ENCODE measurements at regions of chr11 and their contacts with region 1.

Region 1: DNA sequence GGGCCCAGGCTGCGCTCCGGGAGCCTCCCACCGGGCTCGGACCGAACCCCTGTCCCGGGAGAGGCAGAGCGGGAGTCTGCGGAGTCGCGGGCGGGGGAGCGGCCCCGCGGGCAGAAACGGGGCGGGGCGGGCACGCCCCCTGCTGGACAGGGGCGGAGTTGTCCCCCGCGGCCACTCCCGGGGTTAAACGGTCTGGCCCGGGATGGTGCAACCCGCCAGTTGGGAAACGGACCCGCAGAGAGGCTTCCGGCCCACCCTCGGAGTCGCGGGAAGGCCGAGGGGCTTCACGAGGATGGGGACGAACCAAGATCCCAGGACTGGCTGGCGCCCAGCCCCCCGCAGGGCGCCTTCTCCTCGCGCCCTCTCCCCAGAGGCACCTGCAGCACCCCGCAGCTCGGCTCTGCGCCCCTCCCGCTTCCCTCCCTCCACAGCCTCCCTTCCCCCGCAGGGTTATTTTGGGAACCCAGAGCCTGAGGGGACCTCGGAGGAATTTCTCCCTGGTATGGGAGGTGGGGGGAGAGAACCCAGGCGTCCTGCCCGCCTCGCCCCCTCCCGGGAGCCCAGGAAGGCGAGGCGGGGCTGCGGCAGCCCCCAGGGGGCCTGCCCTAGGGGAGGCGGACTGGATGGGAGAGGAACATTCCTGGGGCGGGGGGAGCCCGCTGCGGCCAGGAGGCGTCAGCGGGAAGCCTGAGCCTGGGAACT is 902 bp downstream of the RASGRP2 start:
- DNase-seq: no peak
- ATAC-seq: peak; percentile 76
- H3K4me3 ChIP-seq: peak overlapping the region; percentile 36
- H3K27ac ChIP-seq: no peak overlapping the region
- H3K4me1 ChIP-seq: peaks cover 12% of the 10 kb centered on the region
- H3K27me3 ChIP-seq: peaks cover 69% of the 10 kb centered on the region
- CTCF ChIP-seq: peak; percentile 75
- POLR2A ChIP-seq: no peak
- RAD21 ChIP-seq: peak; percentile 52

Region 2: GRCh38 chr11:64767344-64768299 is 24.6 kb after region 1 on chr11:
- CTCF ChIA-PET with region 1: no interaction called
- POLR2A ChIA-PET with region 1: no interaction called
- dilution Hi-C with region 1: no loop called
- in situ Hi-C with region 1: no loop called
- intact Hi-C with region 1: loop called (anchors 1 kb)
- DNase-seq: peak; percentile 60
- ATAC-seq: peak; percentile 53
- H3K4me3 ChIP-seq: no peak overlapping the region
- H3K27ac ChIP-seq: no peak overlapping the region
- H3K4me1 ChIP-seq: peaks cover 13% of the 10 kb centered on the region
- H3K27me3 ChIP-seq: no peaks in the 10 kb centered on the region
- CTCF ChIP-seq: peak; percentile 63
- POLR2A ChIP-seq: no peak
- RAD21 ChIP-seq: peak; percentile 29; the same call in 1 of the 2 replicates

Region 3: DNA sequence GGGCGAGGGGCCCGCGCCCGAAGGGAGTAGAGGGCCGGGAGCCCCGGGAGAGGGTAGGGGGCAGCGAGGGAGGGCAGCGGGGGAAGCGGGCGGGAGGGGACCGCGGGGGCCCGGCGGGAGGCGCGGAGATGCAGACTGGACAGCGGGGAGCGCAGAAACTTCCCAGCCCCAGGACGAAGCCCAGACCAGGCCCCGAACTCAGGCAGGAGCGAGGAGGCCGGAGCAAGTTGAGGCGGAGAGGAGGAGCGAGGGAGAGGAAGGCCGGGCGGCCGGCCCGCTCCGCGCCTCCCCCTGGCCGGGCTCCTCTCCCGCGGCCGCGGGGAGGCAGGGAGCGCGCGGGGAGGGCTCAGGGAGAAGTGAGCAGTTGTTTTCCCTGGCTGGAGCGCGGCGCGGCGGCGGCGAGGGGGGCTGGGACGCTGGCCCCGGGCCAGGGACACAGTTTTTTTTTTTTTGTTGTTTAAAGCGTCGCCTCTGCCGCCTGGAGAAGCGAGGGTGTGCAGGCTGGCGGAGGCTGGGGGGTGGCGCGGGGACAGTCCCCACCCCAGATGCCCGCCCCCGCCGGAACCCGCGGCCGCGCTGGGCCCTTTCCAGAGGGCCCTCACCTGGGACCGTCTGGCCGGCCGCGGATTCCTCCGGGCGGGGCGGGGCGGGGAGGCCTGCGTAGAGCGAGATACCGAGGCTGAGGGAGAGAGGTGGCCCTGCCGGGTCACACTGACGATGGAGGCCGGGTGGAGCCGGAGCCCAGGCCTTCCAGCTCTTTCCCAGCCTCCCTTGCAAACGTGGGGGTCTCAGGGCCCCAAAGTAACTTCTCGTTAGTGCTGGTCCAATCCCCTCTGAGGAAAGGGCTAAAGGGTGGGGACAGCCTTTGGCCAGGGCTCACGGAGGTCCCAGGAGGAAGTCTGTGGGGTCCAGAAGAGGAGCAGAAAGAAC is 815.2 kb after region 1 on chr11 and contains the start of gene LTBP3:
- CTCF ChIA-PET with region 1: no interaction called
- POLR2A ChIA-PET with region 1: no interaction called
- dilution Hi-C with region 1: no loop called
- in situ Hi-C with region 1: no loop called
- intact Hi-C with region 1: no loop called
- DNase-seq: peak; percentile 71
- ATAC-seq: peak; percentile 78
- H3K4me3 ChIP-seq: peak within 1 kb of the TSS; percentile 74
- H3K27ac ChIP-seq: peak within 1 kb of the TSS; percentile 87
- H3K4me1 ChIP-seq: peaks cover 43% of the 10 kb centered on the region
- H3K27me3 ChIP-seq: no peaks in the 10 kb centered on the region
- CTCF ChIP-seq: 0 out of 2 replicates have a peak, but pooled peaks have one; percentile 11
- POLR2A ChIP-seq: peak; percentile 27; the same call in 1 of the 2 replicates
- RAD21 ChIP-seq: 0 out of 2 replicates have a peak, but pooled peaks have one; percentile 10
- total RNA-seq, gene LTBP3: 6.6 and 8.3 TPM in 2 replicates